ENCODE measurements at regions of chr1 and their contacts with region 1.

Region 1: DNA sequence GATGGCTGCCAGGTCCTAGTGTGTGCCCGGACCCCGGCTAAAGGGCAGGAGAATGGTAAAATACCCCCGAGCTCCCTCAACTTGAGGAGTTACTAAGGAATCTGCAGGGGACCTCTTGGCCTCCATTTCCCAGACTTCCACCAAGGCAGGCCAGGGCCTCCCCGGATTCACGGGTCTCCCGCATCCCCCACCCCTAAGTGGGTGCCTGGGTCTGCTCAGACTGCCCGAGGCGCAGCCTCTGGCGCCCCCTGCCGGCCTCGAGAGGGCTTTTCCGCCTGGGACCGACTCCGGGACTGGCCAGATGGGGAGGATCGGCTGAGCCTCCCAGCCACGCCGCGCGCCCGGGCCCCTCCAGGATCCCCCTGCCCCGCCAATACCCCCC is 1.7 kb downstream of the PLEKHG5 start:
- DNase-seq: no peak
- ATAC-seq: peak; percentile 81
- H3K4me3 ChIP-seq: peak overlapping the region; percentile 85 to 98
- H3K27ac ChIP-seq: peak overlapping the region; percentile 78
- H3K4me1 ChIP-seq: peaks cover 27% of the 10 kb centered on the region
- H3K27me3 ChIP-seq: no peaks in the 10 kb centered on the region
- CTCF ChIP-seq: peak; percentile 99

Region 2: DNA sequence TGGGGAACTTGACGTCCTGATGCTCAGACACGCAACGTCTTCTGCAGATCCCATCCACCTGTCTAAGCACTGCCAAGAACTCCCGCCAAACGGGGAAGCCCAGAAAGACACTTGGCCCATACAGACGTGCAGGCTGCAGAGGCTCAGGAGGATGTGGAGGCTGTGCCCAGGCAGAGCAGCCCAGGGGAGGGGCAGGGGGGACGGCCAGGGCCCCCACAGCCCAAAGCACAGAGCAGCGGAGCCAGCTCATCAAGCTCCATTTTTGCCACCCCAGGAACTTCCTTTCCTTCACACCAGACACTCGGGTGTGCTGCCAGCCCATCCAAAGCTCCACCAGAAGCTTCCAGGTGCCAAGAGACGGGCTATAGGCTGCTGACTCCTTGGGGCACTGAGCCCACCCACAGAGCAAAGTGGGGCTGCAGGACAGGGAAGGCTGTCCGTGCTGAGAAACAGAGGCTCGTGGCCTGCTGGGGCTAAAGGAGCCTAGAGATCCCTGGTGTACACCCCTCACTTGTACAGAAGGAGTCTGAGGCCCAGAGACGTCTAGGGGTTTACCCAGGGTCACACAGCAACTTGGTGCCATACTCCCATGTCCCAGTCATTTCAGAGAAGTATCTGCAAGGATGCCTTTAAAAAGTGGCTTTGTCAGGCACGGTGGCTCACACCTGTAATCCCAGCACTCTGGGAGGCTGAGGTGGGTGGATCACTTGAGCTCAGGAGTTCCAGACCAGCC is 155.4 kb before region 1 on chr1:
- CTCF ChIA-PET with region 1: no interaction called
- POLR2A ChIA-PET with region 1: interaction called, 10 read pairs
- in situ Hi-C with region 1: no loop called
- intact Hi-C with region 1: no loop called
- DNase-seq: no peak
- ATAC-seq: no peak
- H3K4me3 ChIP-seq: no peak overlapping the region
- H3K27ac ChIP-seq: no peak overlapping the region
- H3K4me1 ChIP-seq: no peaks in the 10 kb centered on the region
- H3K27me3 ChIP-seq: no peaks in the 10 kb centered on the region
- CTCF ChIP-seq: no peak

Region 3: GRCh38 chr1:6475381-6476133 is 14.2 kb before region 1 on chr1:
- CTCF ChIA-PET with region 1: interaction called, 10 read pairs
- POLR2A ChIA-PET with region 1: no interaction called
- in situ Hi-C with region 1: no loop called
- intact Hi-C with region 1: no loop called
- DNase-seq: no peak
- ATAC-seq: peak; percentile 88
- H3K4me3 ChIP-seq: no peak overlapping the region
- H3K27ac ChIP-seq: no peak overlapping the region
- H3K4me1 ChIP-seq: no peaks in the 10 kb centered on the region
- H3K27me3 ChIP-seq: no peaks in the 10 kb centered on the region
- CTCF ChIP-seq: peak; percentile 99

Region 4: DNA sequence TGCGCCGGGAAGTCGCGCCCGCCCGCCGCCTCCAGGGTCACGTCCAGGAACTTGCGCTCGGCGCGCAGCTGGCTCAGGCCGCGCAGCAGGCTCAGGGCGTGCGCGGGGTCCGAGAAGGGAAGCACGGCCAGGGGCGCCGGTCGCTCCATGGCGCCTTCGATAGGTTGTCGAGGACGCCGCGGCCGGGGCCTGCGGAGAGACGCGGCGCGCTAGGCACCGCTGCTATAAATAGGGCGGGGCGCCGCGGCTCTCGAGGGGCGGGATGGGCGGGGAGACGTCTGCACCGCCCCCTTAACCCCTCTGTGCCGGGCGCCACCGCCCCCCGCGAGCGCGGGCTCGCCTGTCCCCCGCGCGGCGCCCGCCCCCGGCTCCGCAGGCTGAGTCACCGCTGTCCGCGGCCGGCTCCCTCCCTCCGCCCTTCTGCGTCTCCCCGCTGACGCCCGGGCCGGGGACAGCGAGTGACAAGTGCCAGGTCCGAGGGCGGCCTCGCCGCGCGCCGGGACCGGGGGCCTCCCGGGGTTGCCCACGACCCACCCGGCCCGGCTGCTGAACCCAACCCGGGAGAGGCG is 113.0 kb after region 1 on chr1 and contains the start of gene KLHL21:
- CTCF ChIA-PET with region 1: no interaction called
- POLR2A ChIA-PET with region 1: no interaction called
- in situ Hi-C with region 1: no loop called
- intact Hi-C with region 1: no loop called
- DNase-seq: no peak
- ATAC-seq: peak; percentile 85
- H3K4me3 ChIP-seq: peak within 1 kb of the TSS; percentile 61 to 96
- H3K27ac ChIP-seq: peak within 1 kb of the TSS; percentile 97
- H3K4me1 ChIP-seq: peaks cover 19% of the 10 kb centered on the region
- H3K27me3 ChIP-seq: no peaks in the 10 kb centered on the region
- CTCF ChIP-seq: no peak
- total RNA-seq, gene KLHL21: 35.9 TPM